ENCODE measurements at regions of chr6 and their contacts with region 1.

Region 1: DNA sequence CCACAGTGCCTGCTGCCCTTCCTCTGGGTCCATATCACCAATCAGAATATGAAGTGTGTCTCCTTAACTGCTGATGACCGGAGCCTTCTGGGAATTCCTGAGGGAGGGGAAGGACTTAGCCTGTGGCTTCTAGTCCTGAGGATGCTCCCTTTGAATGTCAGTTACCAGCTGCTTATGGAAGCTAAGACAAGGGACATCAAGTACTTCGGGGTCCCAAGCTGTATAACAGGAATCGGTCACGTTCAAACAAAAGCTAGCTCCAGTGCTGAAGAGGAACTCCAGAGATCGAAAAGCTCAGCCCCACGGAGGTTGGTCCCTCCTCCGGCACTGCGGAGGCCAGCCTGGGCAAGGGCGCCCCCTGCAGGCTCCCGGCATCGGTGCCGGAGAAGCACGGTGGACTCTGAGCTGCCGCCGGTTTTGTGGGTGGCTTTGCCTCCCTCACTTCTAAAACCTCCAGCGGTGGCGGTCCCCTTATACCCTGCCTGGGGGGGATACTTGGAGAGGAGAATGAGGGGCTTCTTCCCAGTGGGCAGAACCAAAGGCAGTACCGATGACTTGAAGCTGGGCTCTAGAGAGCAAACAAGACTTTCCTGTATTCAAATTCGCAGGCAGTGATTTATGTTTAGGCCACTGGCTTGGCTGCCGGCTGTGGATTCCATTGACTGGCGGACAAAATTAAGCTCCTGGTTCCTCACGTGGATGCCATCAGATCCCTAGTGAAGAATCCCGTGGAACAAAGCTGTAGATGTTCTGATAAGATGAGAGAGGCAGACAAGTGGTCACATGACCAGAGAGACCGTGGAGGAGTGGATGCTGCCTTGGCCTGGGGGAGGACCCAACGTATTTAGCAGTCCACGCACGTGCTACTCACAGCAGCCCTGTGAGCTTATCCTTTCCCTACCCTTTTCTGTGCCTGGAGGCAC is 16.2 kb upstream of the UBR2 start:
- DNase-seq: peak; percentile 87
- H3K4me3 ChIP-seq: peak overlapping the region; percentile 58
- H3K27ac ChIP-seq: no peak overlapping the region
- H3K4me1 ChIP-seq: peaks cover 13% of the 10 kb centered on the region
- CTCF ChIP-seq: peak; percentile 99

Region 2: DNA sequence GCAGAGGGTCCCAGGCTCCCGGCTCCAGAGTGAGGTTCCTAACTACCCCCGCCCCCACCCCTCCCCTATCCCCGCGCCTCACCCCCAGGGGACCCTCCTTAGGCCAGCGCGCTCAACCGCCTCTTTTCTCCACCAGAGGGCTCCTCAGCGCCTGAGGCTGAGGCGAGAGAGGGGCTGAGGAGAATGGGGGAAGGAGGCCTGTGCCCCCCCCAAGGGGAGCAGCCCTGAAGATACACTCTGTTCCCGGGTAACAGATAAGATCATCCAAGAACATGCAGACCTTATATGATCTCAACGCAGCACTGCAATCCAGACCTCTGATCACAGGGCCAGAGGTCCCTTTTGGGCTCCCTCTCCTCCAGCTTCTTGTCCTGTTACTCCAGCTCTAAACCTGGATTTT is 286.7 kb before region 1 on chr6:
- CTCF ChIA-PET with region 1: interaction called, 5 read pairs
- POLR2A ChIA-PET with region 1: interaction called, 3 read pairs
- intact Hi-C with region 1: loop called (anchors 2 kb)
- DNase-seq: peak; percentile 58
- H3K4me3 ChIP-seq: peak overlapping the region; percentile 42
- H3K27ac ChIP-seq: no peak overlapping the region
- H3K4me1 ChIP-seq: peaks cover 8% of the 10 kb centered on the region
- CTCF ChIP-seq: peak; percentile 77

Region 3: GRCh38 chr6:42313941-42314570 is 233.6 kb before region 1 on chr6:
- CTCF ChIA-PET with region 1: interaction called, 7 read pairs
- POLR2A ChIA-PET with region 1: no interaction called
- intact Hi-C with region 1: loop called (anchors 1 kb)
- DNase-seq: no peak
- H3K4me3 ChIP-seq: no peak overlapping the region
- H3K27ac ChIP-seq: no peak overlapping the region
- H3K4me1 ChIP-seq: no peaks in the 10 kb centered on the region
- CTCF ChIP-seq: no peak

Region 4: GRCh38 chr6:42440778-42441696 is 106.6 kb before region 1 on chr6:
- CTCF ChIA-PET with region 1: no interaction called
- POLR2A ChIA-PET with region 1: no interaction called
- intact Hi-C with region 1: loop called (anchors 2 kb)
- DNase-seq: no peak
- H3K4me3 ChIP-seq: no peak overlapping the region
- H3K27ac ChIP-seq: no peak overlapping the region
- H3K4me1 ChIP-seq: peaks cover 6% of the 10 kb centered on the region
- CTCF ChIP-seq: no peak